ENCODE measurements at regions of chr14 and their contacts with region 1.

Region 1: DNA sequence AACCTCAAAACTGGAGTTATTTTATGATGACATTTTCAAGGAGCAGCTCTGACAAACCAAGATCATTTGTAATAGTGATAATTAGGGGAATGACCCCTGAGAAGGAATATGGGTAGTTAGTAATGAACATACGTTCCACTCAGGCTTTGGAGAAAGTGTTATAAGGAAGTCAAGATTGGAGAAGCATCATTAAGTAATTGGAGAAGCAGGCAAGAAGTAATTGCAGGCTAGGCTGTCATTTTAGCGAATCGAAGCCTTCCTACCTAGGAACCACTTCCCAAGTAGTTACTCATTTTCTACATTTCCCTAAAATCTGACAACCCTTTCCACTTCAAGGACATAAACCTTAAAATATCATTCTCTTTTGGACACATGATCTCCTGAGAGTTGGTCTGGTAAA is 1.2 kb downstream of the EDDM3B start:
- DNase-seq: no peak
- ATAC-seq: no peak
- H3K4me3 ChIP-seq: no peak overlapping the region
- H3K27ac ChIP-seq: no peak overlapping the region
- H3K4me1 ChIP-seq: peaks cover 0 to 14% (median 0%) of the 10 kb centered on the region in 9 donors
- H3K27me3 ChIP-seq: no peaks in the 10 kb centered on the region
- CTCF ChIP-seq: no peak

Region 2: GRCh38 chr14:20469242-20469889 is 300.1 kb before region 1 on chr14 and contains the start of gene PNP:
- intact Hi-C with region 1: no loop called
- DNase-seq: peak; percentile 83 to 86
- ATAC-seq: peak; percentile 95 to 99 (median 98)
- H3K4me3 ChIP-seq: peak within 1 kb of the TSS; percentile 48 to 97 (median 70)
- H3K27ac ChIP-seq: peak within 1 kb of the TSS; percentile 52 to 97 (median 88)
- H3K4me1 ChIP-seq: peaks cover 0 to 43% (median 26%) of the 10 kb centered on the region in 9 donors
- H3K27me3 ChIP-seq: no peaks in the 10 kb centered on the region
- CTCF ChIP-seq: no peak
- total RNA-seq, gene PNP: 5.0 to 33.7 (median 7.8) TPM

Region 3: GRCh38 chr14:20830831-20831230 is 61.4 kb after region 1 on chr14:
- intact Hi-C with region 1: loop called in 1 of 10 experiments (anchors 5 kb)
- DNase-seq: no peak
- ATAC-seq: no peak
- H3K4me3 ChIP-seq: no peak overlapping the region
- H3K27ac ChIP-seq: no peak overlapping the region
- H3K4me1 ChIP-seq: peaks cover 0 to 7% (median 0%) of the 10 kb centered on the region in 9 donors
- H3K27me3 ChIP-seq: peaks cover 0 to 5% (median 0%) of the 10 kb centered on the region in 7 donors
- CTCF ChIP-seq: no peak